Cardiac septum (tissue), 1 donor: ENCODE measurements at regions of chr17 and their contacts with region 1.

Region 1: GRCh38 chr17:77957857-77958715 is at the start of gene TNRC6C:
- DNase-seq: peak; percentile 100
- total RNA-seq, gene TNRC6C: 17.8 TPM

Region 2: DNA sequence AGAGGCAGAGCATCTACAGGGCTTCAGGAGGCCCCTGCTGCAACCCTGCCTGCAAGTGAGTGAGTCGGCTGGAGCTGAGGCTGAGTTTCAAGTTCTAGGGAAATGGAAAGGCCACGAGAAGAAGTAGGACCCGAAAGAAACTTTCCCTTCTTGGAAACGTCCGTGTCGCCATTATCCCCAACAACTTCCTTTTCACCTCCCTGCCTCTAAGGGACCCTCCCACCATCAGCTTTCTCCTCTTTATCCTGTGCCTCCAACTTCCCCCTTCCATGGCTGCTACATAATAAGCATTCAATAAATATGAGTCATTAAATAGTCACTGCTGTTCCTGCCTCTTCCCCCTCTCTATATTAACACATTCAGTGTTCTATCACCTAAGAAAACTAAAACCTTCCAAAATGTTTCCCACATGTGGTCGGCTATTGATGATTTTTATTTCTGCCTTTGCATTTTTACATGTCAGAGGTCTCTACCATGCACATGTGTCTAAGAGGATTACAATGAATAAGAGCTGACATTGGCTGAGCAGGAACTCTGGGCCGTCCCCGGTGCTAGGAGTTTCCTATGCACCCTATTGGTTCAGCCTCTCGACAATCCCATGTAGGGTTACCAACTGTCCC is 115.4 kb before region 1 on chr17:
- intact Hi-C with region 1: loop called (anchors 1 kb)
- DNase-seq: peak; percentile 9

Region 3: GRCh38 chr17:77881545-77881944 is 76.5 kb before region 1 on chr17:
- intact Hi-C with region 1: loop called (anchors 5 kb)
- DNase-seq: peak; percentile 96

Region 4: DNA sequence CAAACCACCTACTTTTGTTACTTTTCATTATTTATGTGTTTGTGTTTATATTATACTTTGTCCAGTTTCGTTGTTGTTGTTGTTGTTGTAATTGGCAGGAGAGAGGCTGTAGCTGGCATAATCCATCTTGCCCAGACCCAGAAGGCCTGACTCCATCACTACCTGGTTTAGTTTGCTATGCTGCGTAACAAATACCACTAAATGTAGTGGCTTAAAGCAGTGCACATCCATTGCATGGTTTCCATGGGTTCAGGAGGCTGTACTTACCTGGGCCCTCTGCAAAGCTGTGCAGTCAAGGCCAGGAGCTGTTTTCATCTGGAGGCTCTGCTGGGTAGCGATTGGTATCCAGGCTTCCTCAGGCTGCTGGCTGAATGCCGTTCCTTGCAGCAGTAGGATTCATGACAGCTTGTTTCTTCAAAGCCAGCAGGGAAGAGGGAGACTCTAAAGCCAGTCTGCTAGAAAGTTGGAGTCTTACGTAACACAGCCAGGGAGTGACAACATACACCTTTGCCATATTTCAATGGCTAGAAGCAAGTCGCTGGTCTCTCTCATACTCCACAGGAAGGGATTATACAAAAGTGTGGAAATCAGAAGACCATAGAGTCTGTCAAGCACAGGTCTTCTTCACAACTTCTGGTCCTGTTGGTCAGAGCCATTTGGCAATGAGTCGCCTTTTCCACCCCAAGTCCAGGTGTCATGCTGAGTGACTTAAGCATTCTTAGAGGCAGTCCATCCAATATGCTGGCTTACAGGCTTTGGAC is 41.5 kb after region 1 on chr17:
- intact Hi-C with region 1: loop called (anchors 5 kb)
- DNase-seq: no peak